ENCODE measurements at regions of chr1 and their contacts with region 1.

Region 1: DNA sequence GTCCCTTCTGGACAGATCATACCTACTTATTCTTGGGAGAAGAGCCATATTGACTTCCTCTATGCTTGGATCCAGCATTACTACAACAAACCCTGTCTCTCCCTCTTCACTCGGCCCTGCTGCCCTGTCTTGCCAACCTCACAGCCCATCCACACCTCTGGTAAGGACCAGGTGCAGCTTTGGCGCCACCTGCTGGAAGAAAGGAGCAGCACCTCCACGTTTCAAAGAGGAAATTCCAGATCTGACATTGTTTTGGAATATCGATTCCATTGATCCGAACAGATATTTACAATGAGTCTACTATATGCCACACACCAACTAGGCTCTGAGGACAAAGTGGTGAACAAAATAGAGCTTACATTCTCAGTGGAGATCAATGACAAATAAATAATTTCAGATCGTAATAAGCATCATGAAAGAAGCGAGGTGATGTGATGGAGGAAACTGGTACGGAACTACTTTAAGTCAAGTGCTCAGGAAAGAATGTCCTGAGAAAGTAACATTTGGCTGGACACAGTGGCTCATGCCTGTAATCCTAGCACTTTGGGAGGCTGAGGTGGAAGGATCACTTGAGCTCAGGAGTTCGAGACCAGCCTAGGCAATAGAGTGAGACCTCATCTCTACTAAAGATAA is 18.7 kb downstream of the MFSD2A start:
- DNase-seq: peak; percentile 85
- ATAC-seq: peak; percentile 88
- H3K4me3 Mint-ChIP-seq: no peak overlapping the region
- H3K27ac Mint-ChIP-seq: no peak overlapping the region
- H3K4me1 Mint-ChIP-seq: peaks cover 2% of the 10 kb centered on the region
- H3K27me3 Mint-ChIP-seq: no peaks in the 10 kb centered on the region

Region 2: DNA sequence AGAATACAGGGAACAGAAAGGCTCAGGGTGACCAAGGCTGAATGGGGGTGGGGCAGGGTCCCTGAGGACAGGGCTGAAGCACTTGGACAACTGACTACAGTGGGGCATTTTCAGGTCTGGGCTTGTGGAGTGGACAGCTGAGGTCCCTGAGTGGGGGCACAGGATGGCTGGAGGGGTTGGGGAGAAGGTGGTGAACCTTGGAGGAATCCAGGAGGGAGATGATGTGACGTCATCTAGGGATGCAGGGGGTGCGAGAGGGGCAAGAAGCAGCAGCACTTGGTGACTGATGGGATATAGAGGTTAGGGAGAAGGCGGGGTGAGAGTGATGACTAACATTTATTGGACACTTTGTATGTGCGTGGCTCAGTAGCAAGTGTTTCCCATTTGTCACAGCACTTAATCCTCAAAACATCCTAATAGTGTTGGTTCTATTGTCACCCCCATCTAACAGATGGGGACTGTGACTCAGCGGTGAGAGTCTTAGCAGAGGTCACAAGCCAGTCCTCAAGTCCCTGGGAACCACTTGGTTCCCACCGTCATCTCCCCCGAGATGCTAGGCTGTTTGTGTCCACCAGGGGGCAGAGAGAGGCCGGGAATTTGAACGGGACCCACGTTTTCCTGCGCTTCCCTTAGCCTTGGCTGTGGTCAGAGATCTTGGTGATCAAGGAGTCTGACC is 157.1 kb before region 1 on chr1:
- CTCF ChIA-PET with region 1: interaction called, 14 read pairs
- POLR2A ChIA-PET with region 1: interaction called, 3 read pairs
- intact Hi-C with region 1: loop called (anchors 1 kb)
- DNase-seq: peak; percentile 81
- ATAC-seq: peak; percentile 76
- H3K4me3 Mint-ChIP-seq: peak overlapping the region; percentile 9
- H3K27ac Mint-ChIP-seq: peak overlapping the region; percentile 49
- H3K4me1 Mint-ChIP-seq: peaks cover 13% of the 10 kb centered on the region
- H3K27me3 Mint-ChIP-seq: peaks cover 4% of the 10 kb centered on the region

Region 3: DNA sequence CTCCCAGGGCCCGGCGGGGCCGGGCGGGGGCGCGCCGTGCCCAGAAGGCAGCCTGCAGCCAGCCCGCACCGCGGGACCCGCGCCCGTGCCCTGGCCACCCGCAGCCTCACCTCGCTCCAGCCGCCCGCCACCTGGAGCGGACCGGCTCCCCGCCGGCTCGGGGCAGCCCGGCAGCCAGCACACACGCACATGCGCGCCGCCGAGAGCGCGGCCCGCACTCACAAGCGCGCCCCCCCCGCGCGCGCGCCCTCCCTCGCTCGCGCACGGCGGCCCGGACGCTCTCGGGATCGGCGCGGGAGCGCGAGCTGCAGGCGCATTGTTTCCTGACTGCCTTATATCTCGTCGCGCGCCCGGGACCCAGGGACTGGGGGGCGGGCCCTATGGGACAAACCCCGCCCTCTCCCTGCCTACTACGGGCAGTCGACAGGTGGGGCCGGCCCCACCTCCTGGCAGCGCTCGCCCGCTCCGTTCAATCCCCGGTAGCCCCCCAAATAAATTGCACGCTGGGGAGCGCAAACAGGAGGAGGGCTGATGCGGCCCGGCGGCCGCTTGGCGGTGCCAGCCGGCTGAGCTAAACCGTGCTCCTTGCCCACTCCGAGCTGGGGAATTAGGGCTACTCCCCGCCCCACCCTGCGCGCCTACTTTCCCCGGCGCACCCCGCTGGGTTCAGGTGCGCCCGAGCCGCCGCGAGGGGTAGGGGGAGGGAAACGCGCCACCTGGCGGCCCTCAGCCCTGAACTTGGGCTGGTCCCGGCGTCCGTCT is 71.7 kb before region 1 on chr1 and contains the start of gene MYCL:
- CTCF ChIA-PET with region 1: interaction called, 18 read pairs
- POLR2A ChIA-PET with region 1: no interaction called
- intact Hi-C with region 1: loop called in 1 of 2 experiments (anchors 5 kb)
- DNase-seq: peak; percentile 86
- ATAC-seq: peak; percentile 92
- H3K4me3 Mint-ChIP-seq: peak within 1 kb of the TSS; percentile 66
- H3K27ac Mint-ChIP-seq: no peak within 1 kb of the TSS
- H3K4me1 Mint-ChIP-seq: peaks cover 2% of the 10 kb centered on the region
- H3K27me3 Mint-ChIP-seq: peaks cover 51% of the 10 kb centered on the region
- total RNA-seq, gene MYCL: 0.11 to 0.16 TPM

Region 4: GRCh38 chr1:39919545-39919944 is 54.1 kb before region 1 on chr1:
- CTCF ChIA-PET with region 1: interaction called, 134 read pairs
- POLR2A ChIA-PET with region 1: no interaction called
- intact Hi-C with region 1: loop called (anchors 1 kb)
- DNase-seq: peak; percentile 74
- ATAC-seq: peak; percentile 98
- H3K4me3 Mint-ChIP-seq: no peak overlapping the region
- H3K27ac Mint-ChIP-seq: no peak overlapping the region
- H3K4me1 Mint-ChIP-seq: no peaks in the 10 kb centered on the region
- H3K27me3 Mint-ChIP-seq: peaks cover 2% of the 10 kb centered on the region

Region 5: GRCh38 chr1:39954816-39955546 is 18.6 kb before region 1 on chr1 and contains the start of gene MFSD2A:
- CTCF ChIA-PET with region 1: interaction called, 23 read pairs
- POLR2A ChIA-PET with region 1: no interaction called
- intact Hi-C with region 1: no loop called
- DNase-seq: peak; percentile 96
- ATAC-seq: peak; percentile 94
- H3K4me3 Mint-ChIP-seq: peak within 1 kb of the TSS; percentile 88
- H3K27ac Mint-ChIP-seq: peak within 1 kb of the TSS; percentile 82
- H3K4me1 Mint-ChIP-seq: peaks cover 32% of the 10 kb centered on the region
- H3K27me3 Mint-ChIP-seq: no peaks in the 10 kb centered on the region
- total RNA-seq, gene MFSD2A: 8.8 to 12.8 TPM

Region 6: DNA sequence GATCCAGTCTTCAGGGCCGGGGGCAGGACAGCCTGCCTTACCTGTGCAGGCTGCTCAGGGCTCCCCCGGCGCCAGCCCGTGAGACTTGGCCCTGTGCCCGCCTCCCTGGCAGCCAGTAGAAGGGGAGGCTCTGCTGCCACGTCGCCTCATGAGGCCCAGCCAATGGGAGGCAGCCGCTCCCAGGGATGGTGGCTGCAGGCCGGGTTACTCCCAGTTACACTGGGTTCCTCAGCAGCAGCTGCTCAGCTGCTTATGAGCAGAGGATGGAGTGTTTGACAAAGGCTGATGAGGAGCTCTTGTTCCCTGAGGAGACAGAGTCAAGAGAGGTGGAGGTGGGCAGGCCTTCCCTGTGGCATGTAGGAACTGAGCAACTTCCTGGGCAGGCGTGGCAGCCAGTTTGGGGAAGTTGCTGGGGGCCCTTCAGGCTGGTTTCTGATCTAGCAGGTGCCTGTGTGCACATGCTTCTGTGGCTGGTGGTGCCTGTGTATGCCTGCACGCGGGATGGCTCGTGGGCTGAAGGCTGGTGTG is 13.1 kb before region 1 on chr1:
- CTCF ChIA-PET with region 1: interaction called, 23 read pairs
- POLR2A ChIA-PET with region 1: no interaction called
- intact Hi-C with region 1: no loop called
- DNase-seq: peak; percentile 74
- ATAC-seq: peak; percentile 71
- H3K4me3 Mint-ChIP-seq: peak overlapping the region; percentile 47
- H3K27ac Mint-ChIP-seq: no peak overlapping the region
- H3K4me1 Mint-ChIP-seq: peaks cover 35% of the 10 kb centered on the region
- H3K27me3 Mint-ChIP-seq: no peaks in the 10 kb centered on the region

Region 7: GRCh38 chr1:40032240-40032891 is 58.7 kb after region 1 on chr1:
- CTCF ChIA-PET with region 1: interaction called, 24 read pairs
- POLR2A ChIA-PET with region 1: no interaction called
- intact Hi-C with region 1: no loop called
- DNase-seq: peak; percentile 65
- ATAC-seq: peak; percentile 66
- H3K4me3 Mint-ChIP-seq: no peak overlapping the region
- H3K27ac Mint-ChIP-seq: no peak overlapping the region
- H3K4me1 Mint-ChIP-seq: peaks cover 33% of the 10 kb centered on the region
- H3K27me3 Mint-ChIP-seq: no peaks in the 10 kb centered on the region

Measured in activated CD4-positive, alpha-beta T cell treated with anti-CD3 and anti-CD28 coated beads for 36 hours (primary cell).